BJ (cell line): ENCODE measurements at regions of chr2 and their contacts with region 1.

Region 1: GRCh38 chr2:190343500-190344275 is at the start of gene INPP1:
- DNase-seq: no peak
- H3K4me3 ChIP-seq: peak within 1 kb of the TSS; percentile 75
- H3K27me3 ChIP-seq: no peaks in the 10 kb centered on the region
- CTCF ChIP-seq: no peak
- polyA plus RNA-seq, gene INPP1: 6.5 and 8.8 TPM in 2 replicates

Region 2: DNA sequence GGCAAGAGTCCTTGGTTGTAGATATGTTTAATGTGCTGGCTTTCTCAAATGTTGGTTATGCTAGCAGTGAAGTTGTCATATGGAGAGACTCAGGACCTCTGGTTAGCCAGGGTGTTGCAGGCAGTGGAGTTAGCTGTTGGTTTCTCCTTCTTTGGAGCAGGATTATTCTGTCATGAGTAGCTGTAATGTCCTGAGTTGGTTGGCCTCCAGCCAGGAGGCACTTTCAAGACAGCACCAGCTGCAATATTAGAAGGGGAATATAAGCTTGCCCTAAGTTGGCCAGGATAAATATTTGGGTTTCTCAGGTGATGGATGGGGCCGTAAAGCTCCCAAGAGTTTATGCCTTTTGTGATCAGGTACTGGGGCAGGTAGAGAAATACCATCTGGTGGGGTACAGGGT is 346.7 kb before region 1 on chr2:
- CTCF ChIA-PET with region 1: no interaction called
- POLR2A ChIA-PET with region 1: no interaction called
- DNase-seq: no peak
- H3K4me3 ChIP-seq: no peak overlapping the region
- H3K27me3 ChIP-seq: no peaks in the 10 kb centered on the region
- CTCF ChIP-seq: no peak

Region 3: DNA sequence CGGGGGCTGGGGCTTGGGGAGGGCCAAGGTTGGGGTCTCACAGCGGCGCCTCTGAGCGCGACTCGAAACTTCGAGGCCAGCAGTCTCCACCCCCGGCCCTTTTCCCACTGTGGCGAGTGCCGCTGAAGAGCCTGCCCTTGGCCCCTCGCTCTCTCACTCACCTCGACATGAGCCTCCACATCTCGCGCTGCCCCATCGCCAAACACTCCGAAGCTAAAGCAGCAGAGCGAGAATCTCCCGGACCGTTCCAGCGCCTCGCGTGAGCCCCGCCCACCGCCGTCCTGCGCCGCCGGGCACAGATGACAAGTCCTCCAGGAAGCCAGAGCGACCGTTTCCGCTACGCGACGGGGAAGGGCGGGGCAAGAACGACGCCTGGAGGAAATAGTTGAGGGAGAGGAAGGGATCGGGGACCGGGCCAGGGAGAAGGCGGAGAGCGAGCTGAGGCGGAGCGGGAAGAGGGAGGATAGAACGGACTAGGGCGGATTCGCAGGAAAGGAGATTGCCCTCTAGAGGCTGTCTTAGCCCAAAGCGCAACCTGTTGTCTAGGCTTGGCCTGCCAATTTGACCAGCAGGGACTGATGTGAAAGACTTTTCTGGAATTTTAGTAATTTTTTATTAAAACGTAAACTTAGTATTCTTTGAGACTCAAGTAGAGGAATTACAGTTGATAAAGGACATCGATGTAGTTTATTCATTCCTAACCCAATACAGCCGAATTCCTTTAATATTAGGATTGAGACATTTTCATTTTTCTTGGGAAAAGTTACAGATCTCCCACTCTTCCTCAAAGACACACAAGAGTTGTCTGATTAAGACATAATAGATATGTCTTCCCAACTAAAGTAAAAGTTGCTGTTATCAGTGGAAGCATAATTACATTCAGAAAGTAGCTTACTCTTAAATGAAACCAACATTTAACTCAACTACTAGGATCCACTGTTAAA is 23.9 kb before region 1 on chr2 and contains the start of gene HIBCH:
- CTCF ChIA-PET with region 1: interaction called, 13 read pairs
- POLR2A ChIA-PET with region 1: no interaction called
- DNase-seq: peak; percentile 97
- H3K4me3 ChIP-seq: peak within 1 kb of the TSS; percentile 81
- H3K27me3 ChIP-seq: no peaks in the 10 kb centered on the region
- CTCF ChIP-seq: peak; percentile 92
- polyA plus RNA-seq, gene HIBCH: 5.2 and 12.4 TPM in 2 replicates